ENCODE measurements at regions of chr11 and their contacts with region 1.

Region 1: GRCh38 chr11:33362051-33362910 is 105.1 kb downstream of the HIPK3 start:
- DNase-seq: peak in 2 of 5 donors; percentile 55 to 68
- H3K4me3 ChIP-seq: no peak overlapping the region
- H3K27ac ChIP-seq: no peak overlapping the region
- H3K4me1 ChIP-seq: no peaks in the 10 kb centered on the region
- H3K27me3 ChIP-seq: no peaks in the 10 kb centered on the region
- CTCF ChIP-seq: peak; percentile 54

Region 2: DNA sequence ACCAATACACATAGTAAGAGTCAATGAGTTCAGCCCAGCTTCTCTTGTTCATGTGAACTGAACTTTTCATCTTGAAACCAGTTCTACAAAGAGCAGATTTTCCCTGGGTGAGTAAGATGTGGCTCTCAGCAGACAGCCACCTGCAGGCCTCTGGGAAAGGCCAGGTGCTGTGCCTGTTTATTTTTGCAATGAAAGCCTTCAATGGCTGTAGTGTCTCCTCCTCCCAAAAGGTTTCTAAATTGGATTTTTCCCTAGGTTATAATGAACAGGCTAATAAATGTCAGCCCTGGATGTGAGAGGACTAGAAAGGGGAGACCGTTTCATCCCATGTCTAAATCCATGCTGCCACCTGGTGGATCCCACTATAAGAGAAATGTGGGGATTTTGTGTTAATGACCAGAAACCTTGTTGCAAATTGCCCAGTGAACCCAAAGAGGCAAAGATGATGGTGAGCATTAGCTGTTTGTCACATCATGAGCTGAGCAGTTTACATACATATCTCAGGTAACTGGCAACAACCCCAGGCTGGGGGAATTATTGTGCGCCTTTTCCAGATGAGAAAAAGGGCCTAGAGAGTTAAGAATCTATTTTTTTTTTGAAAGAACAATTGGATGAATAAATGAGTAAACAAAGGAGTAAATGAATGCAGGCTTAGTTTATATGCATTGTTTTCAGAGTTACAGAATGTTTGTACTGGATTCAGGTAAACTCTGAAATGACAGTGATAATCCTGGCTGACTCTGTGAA is 325.6 kb after region 1 on chr11:
- intact Hi-C with region 1: loop called (anchors 10 kb)
- DNase-seq: peak in 3 of 5 donors; percentile 72 to 85 (median 84)
- H3K4me3 ChIP-seq: no peak overlapping the region
- H3K27ac ChIP-seq: no peak overlapping the region
- H3K4me1 ChIP-seq: peaks cover 0 to 27% (median 22%) of the 10 kb centered on the region in 3 donors
- H3K27me3 ChIP-seq: no peaks in the 10 kb centered on the region
- CTCF ChIP-seq: peak; percentile 54

Measured in kidney (tissue), 22 donors.